ENCODE measurements at regions of chr6 and their contacts with region 1.

Region 1: DNA sequence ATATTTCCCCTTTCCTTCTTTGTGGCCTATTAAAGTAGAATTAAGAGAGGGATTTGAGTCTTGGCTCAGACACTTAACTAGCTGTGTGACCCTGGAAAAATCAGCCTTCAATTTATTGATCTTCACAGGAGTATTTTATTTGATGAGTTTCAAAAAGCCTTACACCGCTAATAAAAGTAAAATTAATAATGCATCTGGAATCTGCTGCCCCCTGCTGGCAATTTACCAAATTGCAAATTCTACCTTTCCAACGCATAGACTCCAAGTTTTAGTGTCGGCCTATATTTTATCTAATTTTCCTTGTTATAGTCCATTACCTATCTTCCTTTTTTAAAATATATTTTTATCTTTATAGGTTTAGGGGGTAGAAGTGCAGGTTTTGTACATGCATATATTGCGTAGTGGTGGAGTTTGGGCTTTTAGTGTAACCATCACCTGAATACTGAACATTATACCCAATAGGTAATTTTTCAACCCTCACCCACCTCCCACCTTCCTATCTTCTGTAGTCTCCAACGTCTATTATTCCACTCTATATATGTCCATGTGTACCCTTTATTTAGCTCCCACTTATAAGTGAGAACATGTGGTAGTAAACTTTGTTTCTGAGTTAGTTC is 46.3 kb downstream of the GOPC start:
- DNase-seq: no peak
- H3K27ac ChIP-seq: no peak overlapping the region
- CTCF ChIP-seq: peak; percentile 85

Region 2: DNA sequence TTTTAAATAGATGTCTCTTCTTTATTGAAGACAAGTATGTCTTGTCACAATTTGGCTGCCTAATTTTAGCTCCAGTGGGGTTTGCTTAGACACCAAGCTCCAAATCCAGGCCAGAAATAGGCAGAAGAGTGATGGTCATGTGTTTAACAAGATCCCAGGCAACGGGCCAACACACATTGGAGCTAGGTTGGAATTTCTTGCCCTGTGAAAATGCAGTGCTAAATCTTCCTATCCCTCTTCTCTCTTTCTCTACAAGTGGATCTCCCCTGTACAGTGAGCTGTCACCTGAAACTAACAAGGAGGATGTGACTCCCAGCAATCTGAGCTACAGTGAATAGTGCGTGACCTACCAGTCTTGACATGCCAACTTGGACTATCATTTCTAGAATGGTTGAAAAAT is 355.9 kb before region 1 on chr6:
- CTCF ChIA-PET with region 1: no interaction called
- POLR2A ChIA-PET with region 1: no interaction called
- DNase-seq: no peak
- H3K27ac ChIP-seq: no peak overlapping the region
- CTCF ChIP-seq: no peak

Region 3: GRCh38 chr6:117449549-117450439 is 106.2 kb before region 1 on chr6:
- CTCF ChIA-PET with region 1: interaction called, 11 read pairs
- POLR2A ChIA-PET with region 1: no interaction called
- DNase-seq: no peak
- H3K27ac ChIP-seq: peak overlapping the region; percentile 98
- CTCF ChIP-seq: peak; percentile 76

Measured in RWPE1 (cell line).